Dorsolateral prefrontal cortex (tissue), 120 donors: ENCODE measurements at regions of chr6 and their contacts with region 1.

Region 1: DNA sequence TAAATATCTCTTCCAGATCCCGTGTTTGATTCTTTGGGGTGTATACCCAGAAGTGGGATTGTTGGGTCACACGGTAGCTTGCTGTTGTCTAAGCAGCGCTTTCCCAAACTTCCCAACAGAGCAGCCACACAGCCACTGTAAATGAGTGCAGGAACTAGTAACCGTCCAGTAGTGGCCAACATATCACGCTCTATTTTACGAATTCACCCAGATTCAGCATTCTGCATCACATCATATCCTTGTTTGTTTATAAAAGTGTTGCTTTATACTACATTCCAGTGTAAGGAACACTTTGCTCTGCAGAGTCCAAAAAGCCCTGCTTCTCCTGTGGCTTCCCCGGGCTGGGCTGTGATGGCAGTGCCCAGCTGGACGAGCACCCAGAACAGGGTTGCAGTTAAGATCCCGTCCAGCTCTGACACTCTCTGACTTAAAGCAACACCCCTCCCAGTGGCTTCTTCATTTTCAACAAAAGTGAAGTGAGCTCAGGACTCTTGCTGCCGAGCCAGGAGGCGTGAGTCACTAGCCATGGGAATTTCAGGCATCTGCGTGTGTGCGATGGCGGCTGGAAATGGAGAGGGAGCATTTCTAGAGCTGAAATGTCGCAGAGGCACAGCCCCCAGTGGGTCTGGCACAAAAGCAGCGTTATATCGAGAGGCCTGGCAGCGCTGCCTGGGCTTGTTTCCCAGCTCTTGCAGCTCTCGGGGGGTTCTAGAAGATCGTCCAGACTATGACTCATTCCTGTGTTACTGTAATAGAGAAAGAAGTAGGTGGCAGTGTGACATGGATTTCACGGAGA is 216.3 kb upstream of the ECI2 start:
- DNase-seq: peak; percentile 44 to 89 (median 74)
- H3K4me3 ChIP-seq: peak overlapping the region in 58 of 59 donors; percentile 1 to 65 (median 40)
- H3K27ac ChIP-seq: peak overlapping the region in 57 of 59 donors; percentile 13 to 87 (median 71)
- H3K27me3 ChIP-seq: no peaks in the 10 kb centered on the region
- CTCF ChIP-seq: peak in 11 of 56 donors; percentile 4 to 29 (median 21)

Region 2: DNA sequence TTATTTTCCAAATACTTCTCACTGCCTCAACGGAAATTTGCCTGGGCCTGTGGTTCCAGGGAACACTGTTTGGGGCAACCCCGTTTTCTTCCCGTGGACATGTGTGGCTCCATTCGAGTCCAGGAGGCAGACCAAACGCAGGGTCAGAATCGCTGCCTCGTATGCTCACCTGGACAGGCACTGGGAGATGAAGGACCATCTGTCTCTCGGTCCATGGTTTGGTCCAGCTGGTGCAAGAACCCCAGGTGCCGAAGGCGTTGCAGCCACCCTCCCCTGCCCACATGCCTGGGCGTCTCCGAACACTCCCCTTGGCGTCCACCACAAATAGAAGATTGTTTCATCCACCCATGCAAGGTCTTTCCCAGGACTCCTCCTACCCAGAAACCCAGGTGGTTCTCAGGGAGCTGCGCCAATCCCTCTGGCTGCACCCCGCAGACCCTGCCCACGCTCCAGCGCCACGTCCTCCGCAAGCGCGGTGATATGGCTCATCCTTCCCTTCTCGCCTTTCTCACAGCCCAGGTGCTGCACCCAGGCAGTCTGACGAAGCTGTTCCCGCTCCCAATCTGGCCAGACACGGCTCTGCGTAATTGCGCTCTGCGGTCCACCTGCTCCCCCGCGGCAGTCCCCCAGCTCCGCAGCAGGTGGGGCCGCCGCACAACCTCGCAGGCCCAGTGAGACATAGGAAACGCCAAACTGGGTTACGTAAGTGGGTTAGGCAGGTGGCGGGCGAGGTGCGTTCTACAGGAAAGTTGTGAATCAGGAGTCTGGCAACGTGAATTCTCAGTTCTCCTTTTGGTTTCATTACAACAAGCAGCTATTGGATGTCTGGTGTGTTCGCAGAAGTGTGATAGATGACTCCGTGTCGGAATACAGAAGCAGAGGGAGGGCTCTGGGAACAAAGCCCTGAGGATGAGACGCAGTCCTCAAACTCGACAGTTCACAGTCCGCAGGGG is 70.1 kb before region 1 on chr6:
- intact Hi-C with region 1: loop called in 1 of 2 experiments (anchors 2 kb)
- DNase-seq: peak; percentile 25 to 90 (median 70)
- H3K4me3 ChIP-seq: peak overlapping the region in 56 of 59 donors; percentile 9 to 63 (median 44)
- H3K27ac ChIP-seq: peak overlapping the region in 19 of 59 donors; percentile 8 to 75 (median 42)
- H3K27me3 ChIP-seq: peaks cover 0 to 8% (median 0%) of the 10 kb centered on the region in 45 donors
- CTCF ChIP-seq: peak in 19 of 56 donors; percentile 10 to 44 (median 17)

Region 3: GRCh38 chr6:4381381-4381780 is 29.7 kb after region 1 on chr6:
- intact Hi-C with region 1: no loop called
- DNase-seq: no peak
- H3K4me3 ChIP-seq: no peak overlapping the region
- H3K27ac ChIP-seq: no peak overlapping the region
- H3K27me3 ChIP-seq: peaks cover 0 to 9% (median 0%) of the 10 kb centered on the region in 45 donors
- CTCF ChIP-seq: no peak

Region 4: GRCh38 chr6:4511621-4512020 is 159.9 kb after region 1 on chr6:
- intact Hi-C with region 1: loop called in 1 of 2 experiments (anchors 2 kb)
- DNase-seq: no peak
- H3K4me3 ChIP-seq: no peak overlapping the region
- H3K27ac ChIP-seq: peak overlapping the region in 16 of 59 donors; percentile 2 to 75 (median 38)
- H3K27me3 ChIP-seq: no peaks in the 10 kb centered on the region
- CTCF ChIP-seq: no peak

Region 5: GRCh38 chr6:4606821-4607704 is 255.3 kb after region 1 on chr6:
- intact Hi-C with region 1: loop called in 1 of 2 experiments (anchors 2 kb)
- DNase-seq: peak; percentile 62 to 95 (median 76)
- H3K4me3 ChIP-seq: peak overlapping the region in 57 of 59 donors; percentile 3 to 60 (median 34)
- H3K27ac ChIP-seq: peak overlapping the region in 58 of 59 donors; percentile 36 to 96 (median 87)
- H3K27me3 ChIP-seq: no peaks in the 10 kb centered on the region
- CTCF ChIP-seq: peak in 3 of 56 donors; percentile 14 to 26 (median 22)

Region 6: DNA sequence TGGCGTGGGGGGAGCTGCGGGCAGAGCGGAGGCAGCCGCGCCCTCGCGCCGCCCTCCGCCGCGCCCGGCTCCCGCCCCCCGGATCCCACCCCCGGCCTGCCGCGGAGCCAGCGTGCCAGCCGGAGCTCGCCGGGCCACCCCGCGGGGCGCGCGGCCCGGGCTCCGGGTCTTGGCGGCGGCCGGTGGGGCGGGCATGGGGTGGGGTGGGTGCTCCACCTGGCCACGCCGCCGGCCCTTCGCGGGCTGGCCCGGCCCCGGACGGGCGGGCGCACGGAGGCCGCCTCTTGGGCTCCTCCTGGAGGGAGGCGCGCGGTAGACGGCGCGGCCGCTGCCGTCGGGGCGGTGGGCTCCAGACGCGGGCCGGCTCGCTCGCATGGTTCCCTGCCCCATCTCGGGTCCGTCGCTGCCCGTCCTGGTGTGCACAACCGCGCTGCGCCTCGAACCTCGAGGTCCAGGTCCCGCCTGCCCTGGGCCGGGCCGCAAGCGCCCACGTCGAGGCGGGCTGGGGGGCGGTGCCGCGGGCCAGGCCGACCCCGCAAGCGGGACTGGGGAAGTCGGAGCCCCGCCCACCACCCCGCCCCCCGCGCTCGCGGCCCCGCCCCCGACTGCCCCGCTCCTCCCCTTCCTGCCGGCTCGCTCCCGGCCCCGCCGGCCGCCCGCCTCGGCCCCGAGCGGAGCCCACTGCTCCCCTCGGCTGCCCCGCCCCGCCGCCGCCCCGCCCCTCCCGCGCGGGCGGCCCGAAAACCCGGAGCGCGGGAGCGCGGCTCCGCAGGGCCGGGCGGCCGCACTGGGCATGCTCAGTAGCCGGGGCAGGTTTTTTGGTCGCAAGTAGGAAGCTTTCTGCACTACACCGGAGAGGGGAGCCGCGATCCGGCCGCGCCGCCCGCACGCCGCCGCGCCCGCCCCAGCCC is 424.1 kb after region 1 on chr6 and contains the start of gene CDYL:
- intact Hi-C with region 1: loop called in 1 of 2 experiments (anchors 5 kb)
- DNase-seq: peak; percentile 38 to 89 (median 68)
- H3K4me3 ChIP-seq: peak within 1 kb of the TSS; percentile 37 to 82 (median 70)
- H3K27ac ChIP-seq: peak within 1 kb of the TSS in 45 of 59 donors; percentile 11 to 86 (median 67)
- H3K27me3 ChIP-seq: no peaks in the 10 kb centered on the region
- CTCF ChIP-seq: peak in 5 of 56 donors; percentile 11 to 28 (median 16)
- total RNA-seq, gene CDYL: 59.7 to 141 (median 86.0) TPM

Region 7: DNA sequence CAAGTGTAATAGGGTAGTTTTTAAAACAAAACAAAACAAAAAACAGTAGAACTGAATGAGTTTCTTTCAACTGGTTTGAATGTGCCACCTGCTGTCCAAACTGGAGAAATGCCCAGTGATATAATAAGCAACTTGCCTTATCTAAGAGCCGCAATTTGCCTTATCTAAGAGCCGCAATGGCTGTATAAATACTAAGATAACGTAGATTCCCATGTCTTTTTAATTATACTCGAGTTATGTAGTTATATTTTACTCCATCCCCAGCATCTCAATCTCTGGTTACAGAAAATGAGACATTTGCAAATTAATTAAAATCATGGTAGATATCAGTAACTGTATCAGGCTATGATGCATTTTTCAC is 584.9 kb after region 1 on chr6:
- intact Hi-C with region 1: loop called in 1 of 2 experiments (anchors 5 kb)
- DNase-seq: peak in 1 of 10 donors; percentile 21
- H3K4me3 ChIP-seq: peak overlapping the region in 5 of 59 donors; percentile 1 to 27 (median 5)
- H3K27ac ChIP-seq: no peak overlapping the region
- H3K27me3 ChIP-seq: no peaks in the 10 kb centered on the region
- CTCF ChIP-seq: peak; percentile 50 to 84 (median 70)